Kidney (tissue), 22 donors: ENCODE measurements at regions of chr12 and their contacts with region 1.

Region 1: GRCh38 chr12:14995583-14996425 is 23.0 kb downstream of the PDE6H start:
- DNase-seq: peak in 2 of 5 donors; percentile 75 to 91
- H3K4me3 ChIP-seq: no peak overlapping the region
- H3K27ac ChIP-seq: no peak overlapping the region
- H3K4me1 ChIP-seq: peaks cover 0 to 6% (median 0%) of the 10 kb centered on the region in 3 donors
- H3K27me3 ChIP-seq: no peaks in the 10 kb centered on the region
- CTCF ChIP-seq: peak; percentile 67

Region 2: DNA sequence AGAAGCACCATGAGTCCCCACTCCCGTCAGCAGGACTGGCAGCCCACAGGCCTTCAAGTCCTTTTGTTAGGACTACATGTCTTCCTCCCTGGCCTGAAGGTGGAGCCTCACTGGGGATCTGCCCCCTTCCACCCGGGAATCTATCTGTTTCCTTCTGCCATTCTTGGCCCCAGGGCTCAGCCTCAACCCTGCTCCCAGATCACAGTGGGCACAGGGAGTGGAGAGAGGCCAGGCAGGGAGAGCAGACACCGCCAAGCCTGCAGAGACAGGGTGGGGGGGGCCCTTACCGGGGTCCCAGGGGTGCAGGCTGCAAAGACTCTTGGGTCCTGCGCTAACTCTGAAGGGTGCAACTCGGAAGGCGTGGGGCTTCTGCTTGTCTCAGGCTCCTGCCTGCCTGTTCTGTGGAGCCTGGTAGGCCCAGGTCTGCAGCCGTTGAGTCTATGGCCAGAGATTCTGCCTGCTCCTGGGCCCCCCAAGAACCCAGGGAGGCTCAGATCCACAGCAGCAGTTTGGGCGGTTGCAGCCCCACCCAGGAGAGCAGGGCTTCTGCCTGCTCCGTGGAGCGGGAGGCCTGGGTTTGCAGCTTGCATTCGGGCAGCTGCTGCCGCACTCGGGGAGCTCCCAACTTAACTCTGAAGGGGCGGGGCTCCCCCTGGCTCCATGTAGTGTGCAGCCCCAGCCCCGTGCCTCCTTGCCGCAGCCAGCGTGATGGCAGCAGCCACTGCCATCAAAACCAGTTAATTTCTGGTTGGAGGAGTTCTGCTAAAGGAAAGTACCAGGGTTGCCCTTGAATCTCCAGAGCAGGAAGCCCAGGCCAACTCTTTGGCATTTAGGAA is 406.4 kb before region 1 on chr12:
- intact Hi-C with region 1: no loop called
- DNase-seq: no peak
- H3K4me3 ChIP-seq: no peak overlapping the region
- H3K27ac ChIP-seq: no peak overlapping the region
- H3K4me1 ChIP-seq: no peaks in the 10 kb centered on the region
- H3K27me3 ChIP-seq: no peaks in the 10 kb centered on the region
- CTCF ChIP-seq: no peak

Region 3: GRCh38 chr12:14841761-14842160 is 154.0 kb before region 1 on chr12:
- intact Hi-C with region 1: loop called (anchors 5 kb)
- DNase-seq: peak in 2 of 5 donors; percentile 39 to 70
- H3K4me3 ChIP-seq: peak overlapping the region in 2 of 3 donors; percentile 13 to 38
- H3K27ac ChIP-seq: peak overlapping the region; percentile 40 to 66
- H3K4me1 ChIP-seq: peaks cover under 1 to 26% (median 9%) of the 10 kb centered on the region in 3 donors
- H3K27me3 ChIP-seq: no peaks in the 10 kb centered on the region
- CTCF ChIP-seq: no peak

Region 4: GRCh38 chr12:15050659-15051058 is 54.9 kb after region 1 on chr12:
- intact Hi-C with region 1: no loop called
- DNase-seq: peak in 1 of 5 donors; percentile 49
- H3K4me3 ChIP-seq: peak overlapping the region in 2 of 3 donors; percentile 27 to 42
- H3K27ac ChIP-seq: no peak overlapping the region
- H3K4me1 ChIP-seq: peaks cover 0 to 5% (median 0%) of the 10 kb centered on the region in 3 donors
- H3K27me3 ChIP-seq: no peaks in the 10 kb centered on the region
- CTCF ChIP-seq: no peak